Activated T-helper 2 cell treated with anti-CD3 and anti-CD28 coated beads, Interferon-gamma antibody, Interleukin-2, Interleukin-4, amounts not matched to agents 10 μg/mL and 5 μg/mL and 100 μg/mL, durations not matched to agents 14 hours and 24 hours and 36 hours (primary cell): ENCODE measurements at regions of chr1 and their contacts with region 1.

Region 1: DNA sequence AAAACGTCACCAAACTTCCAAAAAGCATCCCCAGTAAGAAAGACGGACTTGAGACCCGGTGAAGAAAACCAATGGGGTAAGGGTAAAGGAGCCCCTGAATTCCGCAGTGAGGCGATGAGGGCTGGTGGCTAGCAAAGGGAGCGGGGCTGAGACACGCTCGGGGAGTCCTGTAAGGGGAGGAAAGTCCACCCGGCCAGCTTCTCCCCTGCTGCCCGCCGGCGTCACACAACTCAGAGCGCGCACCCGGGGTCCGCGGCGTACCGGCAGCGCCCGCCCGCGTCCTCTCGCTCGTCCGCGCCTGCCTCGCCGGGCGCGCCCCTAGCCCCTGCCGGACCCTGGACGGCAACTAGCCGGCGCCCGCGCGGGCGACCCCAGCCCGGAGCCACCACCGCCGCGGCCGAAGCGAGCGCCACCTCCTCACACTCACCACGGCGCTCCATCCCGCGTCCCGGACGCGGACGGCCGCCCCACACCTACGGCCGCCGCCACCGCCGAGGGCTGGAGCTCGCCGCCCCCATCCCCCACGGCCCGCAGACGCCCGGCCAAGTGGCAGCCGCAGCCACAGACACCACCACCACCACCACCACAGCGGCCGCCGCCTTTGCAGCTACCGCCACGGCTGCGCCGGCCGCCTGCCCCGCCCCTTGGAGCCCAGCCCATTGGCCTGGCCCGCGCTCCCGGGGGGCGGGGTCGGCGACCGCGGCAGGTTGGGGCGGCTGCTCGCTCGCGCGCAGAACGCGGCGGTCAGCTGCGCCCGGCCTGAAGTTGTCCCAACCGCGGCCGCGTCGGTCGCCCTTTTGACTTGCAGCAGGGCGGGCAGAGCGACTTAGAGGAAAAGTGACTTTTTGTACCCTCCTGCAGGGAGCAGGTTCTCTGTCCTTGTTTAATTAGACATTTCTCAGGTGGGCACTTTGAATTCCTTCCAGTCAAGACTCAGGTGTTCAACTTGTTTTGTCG is 10.0 kb upstream of the ARHGAP29 start:
- DNase-seq: no peak
- H3K4me3 Mint-ChIP-seq: peak overlapping the region; percentile 73
- H3K27ac Mint-ChIP-seq: no peak overlapping the region
- H3K4me1 Mint-ChIP-seq: peaks cover 7% of the 10 kb centered on the region
- H3K27me3 Mint-ChIP-seq: peaks cover 70% of the 10 kb centered on the region

Region 2: GRCh38 chr1:94329986-94330385 is 82.6 kb after region 1 on chr1:
- intact Hi-C with region 1: loop called (anchors 5 kb)
- DNase-seq: no peak
- H3K4me3 Mint-ChIP-seq: no peak overlapping the region
- H3K27ac Mint-ChIP-seq: no peak overlapping the region
- H3K4me1 Mint-ChIP-seq: peaks cover 9% of the 10 kb centered on the region
- H3K27me3 Mint-ChIP-seq: peaks cover 45% of the 10 kb centered on the region

Region 3: GRCh38 chr1:94522304-94522703 is 274.9 kb after region 1 on chr1:
- intact Hi-C with region 1: no loop called
- DNase-seq: no peak
- H3K4me3 Mint-ChIP-seq: no peak overlapping the region
- H3K27ac Mint-ChIP-seq: no peak overlapping the region
- H3K4me1 Mint-ChIP-seq: no peaks in the 10 kb centered on the region
- H3K27me3 Mint-ChIP-seq: peaks cover 6% of the 10 kb centered on the region